ENCODE measurements at regions of chr18 and their contacts with region 1.

Region 1: GRCh38 chr18:43422518-43422917 is 145.2 kb upstream of the SYT4 start:
- DNase-seq: peak; percentile 21
- ATAC-seq: peak; percentile 87
- H3K4me3 Mint-ChIP-seq: no peak overlapping the region
- H3K27ac Mint-ChIP-seq: no peak overlapping the region
- H3K4me1 Mint-ChIP-seq: peaks cover 11% of the 10 kb centered on the region
- H3K27me3 Mint-ChIP-seq: no peaks in the 10 kb centered on the region
- CTCF ChIP-seq: no peak

Region 2: DNA sequence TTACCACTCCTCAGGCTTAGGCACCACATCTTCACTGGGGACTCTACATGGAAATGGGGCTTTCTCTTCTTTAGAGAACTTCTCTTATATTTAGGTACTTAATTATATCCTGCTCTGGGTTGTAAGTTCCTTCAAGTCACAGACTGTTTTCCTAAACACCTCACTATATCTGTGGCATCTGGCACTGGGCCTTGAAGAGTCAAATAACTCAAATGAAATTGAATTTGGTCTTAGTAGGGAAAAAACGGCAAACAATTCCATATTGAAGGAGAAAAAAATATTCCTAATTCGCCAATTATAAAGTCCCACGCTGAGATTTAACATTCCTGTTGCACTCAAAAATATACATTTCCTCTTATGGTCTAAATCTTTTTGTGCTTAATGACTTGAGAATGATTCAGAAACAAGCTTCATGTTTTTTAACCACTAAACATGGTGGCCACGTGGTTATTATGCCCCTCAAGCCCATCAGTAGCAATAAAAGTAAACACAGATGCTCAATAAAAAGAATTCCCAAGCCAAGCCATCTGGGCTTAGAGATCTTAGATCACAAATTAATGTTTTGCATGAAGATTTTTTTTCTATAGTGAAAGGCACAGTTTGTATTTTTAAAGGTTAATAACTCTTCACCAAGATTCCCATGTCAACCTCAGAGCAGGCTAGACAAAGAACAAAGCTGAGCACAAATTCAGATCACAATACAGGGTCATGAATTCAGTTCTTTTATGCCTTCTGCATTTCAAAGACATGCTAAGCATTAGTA is 39.7 kb before region 1 on chr18:
- CTCF ChIA-PET with region 1: no interaction called
- POLR2A ChIA-PET with region 1: no interaction called
- DNase-seq: no peak
- ATAC-seq: no peak
- H3K4me3 Mint-ChIP-seq: no peak overlapping the region
- H3K27ac Mint-ChIP-seq: no peak overlapping the region
- H3K4me1 Mint-ChIP-seq: peaks cover 14% of the 10 kb centered on the region
- H3K27me3 Mint-ChIP-seq: no peaks in the 10 kb centered on the region
- CTCF ChIP-seq: no peak

Region 3: GRCh38 chr18:43435851-43436250 is 13.3 kb after region 1 on chr18:
- CTCF ChIA-PET with region 1: interaction called, 13 read pairs
- POLR2A ChIA-PET with region 1: no interaction called
- DNase-seq: no peak
- ATAC-seq: no peak
- H3K4me3 Mint-ChIP-seq: no peak overlapping the region
- H3K27ac Mint-ChIP-seq: no peak overlapping the region
- H3K4me1 Mint-ChIP-seq: no peaks in the 10 kb centered on the region
- H3K27me3 Mint-ChIP-seq: no peaks in the 10 kb centered on the region
- CTCF ChIP-seq: no peak

Measured in WTC11 (cell line).